GM10248 (cell line): ENCODE measurements at regions of chr7 and their contacts with region 1.

Region 1: DNA sequence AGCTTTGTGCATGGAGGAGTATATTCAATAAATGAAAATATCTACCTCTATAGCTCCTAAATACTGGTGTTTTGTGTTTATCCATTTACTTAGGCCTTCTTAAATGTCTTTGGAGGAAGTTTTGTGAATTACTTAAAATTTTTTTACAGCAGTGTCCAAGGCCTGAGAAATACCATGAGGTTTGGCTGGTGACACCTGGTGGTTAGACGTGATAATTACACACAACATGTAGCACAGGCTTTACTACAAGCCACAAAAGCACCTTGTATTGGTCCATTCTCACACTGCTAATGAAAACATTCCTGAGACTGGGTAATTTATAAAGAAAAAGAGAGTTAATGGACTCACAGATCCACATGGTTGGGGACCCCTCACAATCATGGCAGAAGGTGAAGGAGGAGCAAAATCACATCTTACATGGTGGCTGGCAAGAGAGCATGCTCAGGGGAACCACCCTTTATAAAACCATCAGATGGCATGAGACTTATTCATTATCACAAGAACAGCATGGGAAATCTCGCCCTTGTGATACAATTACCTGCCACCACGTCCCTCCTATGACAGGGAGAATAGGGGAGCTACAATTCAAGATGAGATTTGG is 20.6 kb downstream of the HYAL4 start:
- DNase-seq: peak; percentile 24
- CTCF ChIP-seq: peak; percentile 51

Region 2: GRCh38 chr7:123537026-123537642 is 328.5 kb before region 1 on chr7:
- CTCF ChIA-PET with region 1: no interaction called
- POLR2A ChIA-PET with region 1: no interaction called
- DNase-seq: no peak
- CTCF ChIP-seq: peak; percentile 51

Region 3: GRCh38 chr7:123692471-123692877 is 173.1 kb before region 1 on chr7:
- CTCF ChIA-PET with region 1: interaction called, 15 read pairs
- POLR2A ChIA-PET with region 1: no interaction called
- DNase-seq: no peak
- CTCF ChIP-seq: no peak

Region 4: DNA sequence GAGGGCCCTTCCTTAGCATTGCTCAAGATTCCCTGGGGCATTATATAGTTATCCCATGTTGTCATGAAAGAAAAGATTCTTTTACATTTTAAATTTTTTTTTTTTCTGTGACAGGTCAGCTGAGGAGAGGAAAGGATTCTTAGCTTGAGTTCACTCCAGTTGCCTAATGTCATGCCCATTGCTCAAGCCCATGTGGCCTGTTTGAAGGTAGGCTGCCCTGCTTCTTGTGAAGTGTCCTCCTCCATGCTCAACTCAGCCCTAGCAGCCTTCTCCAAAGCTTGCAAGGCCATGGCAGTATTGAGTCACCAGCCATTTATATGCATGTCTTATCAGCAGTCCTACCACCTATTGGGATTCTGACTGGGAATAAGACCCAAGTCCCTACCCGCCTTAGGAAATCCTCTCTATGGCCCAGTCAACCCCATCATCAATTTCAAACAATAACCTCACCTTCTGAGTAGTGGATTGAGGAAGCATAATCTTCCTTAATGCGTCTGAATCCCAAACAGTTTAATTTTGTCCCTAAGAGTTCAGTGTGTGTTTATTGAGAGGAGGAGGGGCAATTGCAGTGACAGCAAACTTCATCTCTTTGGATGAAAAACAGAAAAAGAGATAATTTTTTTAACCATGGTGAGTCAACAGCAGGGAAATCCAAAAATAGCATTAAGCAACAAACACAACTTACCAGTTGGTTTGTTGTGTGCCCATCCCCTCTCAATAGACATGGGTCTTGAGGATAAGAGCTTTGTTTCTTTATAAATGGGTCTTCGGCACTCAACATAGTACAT is 78.2 kb before region 1 on chr7:
- CTCF ChIA-PET with region 1: interaction called, 18 read pairs
- POLR2A ChIA-PET with region 1: no interaction called
- DNase-seq: no peak
- CTCF ChIP-seq: no peak

Region 5: DNA sequence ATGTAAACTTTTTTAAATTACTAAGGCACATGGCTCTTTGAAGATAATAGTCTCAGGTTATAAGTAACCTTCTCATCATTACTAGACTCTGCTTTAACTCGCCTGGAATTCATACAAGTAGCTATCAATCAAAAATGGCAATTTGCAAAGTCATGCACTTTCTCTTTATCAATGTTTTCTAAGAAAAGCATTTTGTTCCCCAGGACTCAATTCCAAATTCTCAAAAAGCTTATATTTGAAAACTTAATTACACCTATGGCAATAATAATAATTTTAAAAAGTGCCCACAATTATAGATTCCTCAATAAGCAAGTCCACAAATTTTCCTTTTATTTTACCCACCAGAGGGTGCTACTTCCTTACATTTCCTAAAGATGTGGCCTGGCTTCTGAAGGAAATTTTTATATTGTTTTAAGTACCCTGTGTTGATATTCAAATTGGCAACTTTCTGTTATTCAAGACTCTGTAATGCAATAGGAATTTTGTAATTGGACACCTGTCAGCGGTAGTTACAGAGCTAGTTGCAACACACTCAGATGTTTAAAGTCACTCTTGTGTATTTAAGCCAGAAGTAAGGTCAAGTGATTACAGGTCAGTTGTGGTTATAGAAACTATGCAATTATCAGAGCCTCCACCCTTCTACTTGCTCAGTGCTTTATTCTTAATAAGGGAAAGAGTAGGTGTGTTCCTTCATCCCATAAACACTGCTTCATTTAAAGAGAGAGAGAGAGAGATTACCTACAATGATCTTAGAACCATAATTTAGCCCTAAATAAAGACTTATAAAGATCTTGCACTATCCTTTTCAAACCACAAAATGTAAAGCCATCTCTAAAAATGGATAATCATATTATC is 67.7 kb before region 1 on chr7:
- CTCF ChIA-PET with region 1: interaction called, 109 read pairs
- POLR2A ChIA-PET with region 1: no interaction called
- DNase-seq: peak; percentile 17
- CTCF ChIP-seq: peak; percentile 38

Region 6: DNA sequence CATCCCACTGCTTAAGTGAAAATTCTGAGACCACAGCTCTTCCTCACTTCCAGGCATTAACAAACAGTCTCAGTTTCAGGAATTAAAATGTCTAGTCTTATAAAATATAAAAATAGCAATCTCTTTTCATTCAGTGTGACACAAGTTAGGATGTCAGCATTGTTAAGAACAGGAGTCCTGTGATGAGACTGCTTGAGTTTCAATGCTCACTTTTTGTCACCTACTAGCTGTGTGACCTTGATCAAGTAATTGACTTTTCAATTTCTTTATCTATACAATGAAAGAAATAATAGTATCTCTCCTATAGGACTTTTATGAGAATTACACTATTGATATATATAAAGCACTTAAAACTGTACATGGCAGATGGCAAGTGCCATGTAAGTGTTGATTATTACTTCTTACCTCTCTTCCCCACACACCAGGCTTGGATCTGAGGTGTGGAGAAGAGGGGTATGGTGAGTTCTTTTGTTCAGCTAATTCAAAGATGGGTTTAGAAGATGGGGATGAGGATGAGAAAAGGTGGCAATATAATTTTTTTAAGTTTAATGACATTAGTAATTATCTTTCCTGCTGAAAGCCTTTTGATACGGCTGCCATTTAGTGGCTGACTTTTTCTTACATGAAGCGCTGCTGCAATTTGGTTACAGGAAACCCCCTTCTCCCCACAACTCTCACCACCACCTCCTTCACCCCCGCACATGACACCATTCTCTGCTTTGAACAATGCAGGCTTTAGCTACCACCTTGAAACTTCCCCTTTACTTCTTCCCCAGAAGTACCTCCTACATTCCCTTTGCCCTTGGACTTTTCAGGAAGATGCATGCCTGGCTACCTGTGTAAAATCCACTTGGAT is 41.5 kb before region 1 on chr7:
- CTCF ChIA-PET with region 1: interaction called, 18 read pairs
- POLR2A ChIA-PET with region 1: no interaction called
- DNase-seq: peak; percentile 42
- CTCF ChIP-seq: no peak

Region 7: GRCh38 chr7:123879628-123880027 is 14.0 kb after region 1 on chr7:
- CTCF ChIA-PET with region 1: interaction called, 18 read pairs
- POLR2A ChIA-PET with region 1: no interaction called
- DNase-seq: no peak
- CTCF ChIP-seq: no peak

Region 8: DNA sequence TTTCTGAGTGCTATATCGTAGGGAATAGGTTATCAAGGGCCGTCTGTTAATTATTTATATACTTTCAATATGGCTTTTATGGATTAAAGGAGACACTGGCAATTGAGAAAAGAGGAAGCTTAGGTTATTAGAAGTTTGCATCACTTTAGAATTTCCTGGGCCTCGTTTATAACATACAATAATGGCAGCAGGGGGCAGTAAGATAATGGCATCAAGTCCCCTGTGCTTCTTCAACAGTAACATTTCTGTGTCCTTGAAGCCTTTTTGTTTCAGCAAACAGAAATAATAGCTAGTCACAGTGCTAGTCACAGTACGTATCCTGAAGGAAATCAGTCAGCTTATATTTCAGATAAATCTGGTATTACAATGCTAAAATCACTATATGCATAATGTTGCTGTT is 101.3 kb after region 1 on chr7:
- CTCF ChIA-PET with region 1: no interaction called
- POLR2A ChIA-PET with region 1: no interaction called
- DNase-seq: no peak
- CTCF ChIP-seq: no peak

Region 9: DNA sequence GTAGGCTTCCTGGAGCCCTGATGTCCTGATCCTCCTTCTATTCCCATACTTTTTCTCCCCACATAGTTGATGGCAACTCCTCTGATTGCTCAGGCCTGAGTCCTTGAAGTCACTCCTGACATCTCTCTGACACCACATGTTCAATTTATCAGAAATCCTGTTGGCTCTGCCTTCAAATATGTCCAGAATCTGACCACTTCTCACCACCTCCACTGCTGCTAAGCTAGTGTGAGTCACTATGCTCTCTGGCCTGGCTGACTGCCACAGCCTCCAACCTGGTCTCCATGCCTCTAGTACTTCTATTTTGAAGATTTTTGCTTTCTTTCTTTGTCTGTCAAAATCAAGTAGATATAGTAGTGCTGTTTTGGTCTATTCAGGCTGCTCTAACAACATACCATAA is 114.3 kb after region 1 on chr7:
- CTCF ChIA-PET with region 1: no interaction called
- POLR2A ChIA-PET with region 1: no interaction called
- DNase-seq: no peak
- CTCF ChIP-seq: no peak